Adrenal gland (tissue), 19 donors: ENCODE measurements at regions of chr17 and their contacts with region 1.

Region 1: DNA sequence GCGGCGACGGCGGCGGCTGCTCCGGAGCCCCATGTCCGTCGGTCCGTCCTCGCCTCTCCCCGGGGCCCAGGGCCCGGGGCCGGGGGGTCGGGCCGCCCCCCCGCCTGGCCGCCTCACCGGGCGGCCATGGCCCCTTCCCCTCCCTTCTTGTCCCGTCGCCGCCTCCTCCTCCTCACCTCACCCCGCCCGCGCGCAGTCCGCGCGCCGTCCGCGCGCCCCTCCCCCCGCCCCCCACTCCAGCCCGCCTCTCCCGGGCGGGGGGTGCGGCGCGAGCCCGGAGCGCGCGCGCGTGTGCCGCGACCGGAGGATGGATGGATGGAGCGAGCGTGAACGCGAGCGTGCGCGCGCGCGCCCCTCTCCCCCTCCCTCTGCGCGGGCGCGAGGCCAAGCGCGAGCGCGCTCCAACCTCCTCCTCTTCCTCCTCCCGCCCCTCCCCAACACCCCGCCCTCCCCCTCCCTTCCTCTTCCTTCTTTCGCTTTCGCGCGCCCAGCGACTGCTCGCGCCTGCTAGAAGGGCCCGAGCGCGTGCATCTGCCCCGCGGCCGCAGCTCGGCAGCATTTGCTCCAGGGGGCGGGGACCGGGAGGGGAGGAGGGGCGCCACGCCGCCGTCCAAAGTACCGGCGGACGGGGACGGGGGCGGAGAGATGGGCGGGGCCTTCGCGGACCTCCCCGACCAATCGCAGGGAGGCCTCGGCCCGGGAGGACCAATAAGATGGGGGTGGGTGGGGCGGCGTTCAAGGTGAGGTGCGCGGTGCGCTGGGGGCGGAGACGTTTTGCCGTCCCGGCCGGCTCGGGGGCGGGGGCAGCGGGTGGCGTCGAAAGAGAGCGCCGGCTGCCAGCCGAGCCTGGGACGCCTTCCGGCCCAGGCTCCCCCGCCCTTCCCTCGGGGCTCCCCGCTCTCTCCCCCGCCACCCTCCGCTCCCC is at the start of gene ATXN7L3:
- DNase-seq: peak; percentile 99 to 100 (median 99)
- H3K4me3 ChIP-seq: peak within 1 kb of the TSS in 3 of 4 donors; percentile 65 to 90 (median 76)
- H3K27ac ChIP-seq: peak within 1 kb of the TSS; percentile 86 to 96 (median 89)
- H3K4me1 ChIP-seq: peaks cover 22 to 32% of the 10 kb centered on the region in 2 donors
- H3K27me3 ChIP-seq: no peaks in the 10 kb centered on the region
- CTCF ChIP-seq: no peak
- POLR2A ChIP-seq: peak in 1 of 2 donors; percentile 37
- total RNA-seq, gene ATXN7L3: 21.3 to 61.4 (median 48.9) TPM

Region 2: GRCh38 chr17:44522883-44523671 is 323.3 kb after region 1 on chr17:
- intact Hi-C with region 1: loop called in 1 of 2 experiments (anchors 10 kb)
- DNase-seq: peak; percentile 62 to 86 (median 80)
- H3K4me3 ChIP-seq: no peak overlapping the region
- H3K27ac ChIP-seq: no peak overlapping the region
- H3K4me1 ChIP-seq: no peaks in the 10 kb centered on the region
- H3K27me3 ChIP-seq: no peaks in the 10 kb centered on the region
- CTCF ChIP-seq: peak; percentile 36 to 65 (median 58)
- POLR2A ChIP-seq: no peak